ENCODE measurements at regions of chr16 and their contacts with region 1.

Region 1: DNA sequence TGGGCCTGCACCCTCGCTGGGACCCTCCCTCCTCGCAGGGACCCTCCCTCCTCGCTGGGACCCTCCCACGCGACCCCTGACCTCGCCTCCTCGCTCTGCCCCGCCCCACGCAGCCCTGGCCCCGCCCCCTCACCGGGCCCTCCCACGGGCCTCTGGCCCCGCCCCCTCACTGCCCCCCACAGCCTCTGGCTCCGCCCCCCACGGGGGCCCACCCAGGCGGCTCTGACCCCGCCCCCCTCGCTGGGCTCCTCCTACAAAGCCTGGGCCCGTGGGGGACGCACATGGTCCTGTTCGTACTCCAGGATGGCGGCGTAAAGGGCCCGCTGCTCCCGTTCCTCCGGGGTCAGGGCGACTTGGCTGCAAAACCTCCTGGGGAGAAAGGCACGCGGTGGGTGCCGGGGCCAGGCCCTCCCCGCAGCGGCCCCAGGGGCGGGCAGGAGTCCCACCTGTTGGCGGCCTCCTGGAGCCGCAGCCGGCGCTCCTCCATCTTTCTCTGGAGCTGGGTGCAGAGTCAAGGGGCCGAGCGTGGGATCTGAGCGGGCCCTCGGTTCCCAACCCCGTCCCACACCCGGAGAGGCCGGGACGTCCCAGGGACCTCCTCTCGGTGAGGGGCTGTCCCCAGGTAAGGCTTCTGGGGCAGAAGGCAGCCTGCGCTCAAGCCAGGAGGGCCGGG is 9.0 kb downstream of the VPS9D1 start:
- DNase-seq: peak; percentile 88 to 99 (median 98)
- ATAC-seq: peak; percentile 86
- H3K4me3 ChIP-seq: peak overlapping the region; percentile 99
- H3K27ac ChIP-seq: peak overlapping the region; percentile 74
- H3K4me1 ChIP-seq: peaks cover 15 to 81% of the 10 kb centered on the region in 2 experiments; a peak in 4 of 5 replicates
- H3K27me3 ChIP-seq: no peaks in the 10 kb centered on the region
- CTCF ChIP-seq: no peak
- EP300 ChIP-seq: no peak
- POLR2A ChIP-seq: peak; percentile 94
- RAD21 ChIP-seq: no peak

Region 2: GRCh38 chr16:89749647-89750046 is 37.9 kb after region 1 on chr16:
- CTCF ChIA-PET with region 1: no interaction called
- POLR2A ChIA-PET with region 1: interaction called, 5 read pairs
- in situ Hi-C with region 1: no loop called
- intact Hi-C with region 1: loop called (anchors 5 kb)
- DNase-seq: no peak
- ATAC-seq: no peak
- H3K4me3 ChIP-seq: no peak overlapping the region
- H3K27ac ChIP-seq: no peak overlapping the region
- H3K4me1 ChIP-seq: no peaks in the 10 kb centered on the region; a peak in 1 of 5 replicates
- H3K27me3 ChIP-seq: no peaks in the 10 kb centered on the region
- CTCF ChIP-seq: no peak
- EP300 ChIP-seq: no peak
- POLR2A ChIP-seq: no peak
- RAD21 ChIP-seq: no peak